A549 (cell line): ENCODE measurements at regions of chr2 and their contacts with region 1.

Region 1: GRCh38 chr2:96580771-96581170 is 44.2 kb downstream of the ARID5A start:
- DNase-seq: peak; percentile 18 to 46
- ATAC-seq: peak; percentile 93 to 97
- H3K4me3 ChIP-seq: no peak overlapping the region
- H3K27ac ChIP-seq: no peak overlapping the region
- H3K4me1 ChIP-seq: peaks cover 6% of the 10 kb centered on the region; the same call in 1 of the 3 replicates
- CTCF ChIP-seq: peak; percentile 44
- EP300 ChIP-seq: no peak
- POLR2A ChIP-seq: no peak
- RAD21 ChIP-seq: peak; percentile 62 to 65

Region 2: GRCh38 chr2:96594691-96595152 is 14.0 kb after region 1 on chr2:
- CTCF ChIA-PET with region 1: interaction called, 14 read pairs
- POLR2A ChIA-PET with region 1: no interaction called
- DNase-seq: no peak
- ATAC-seq: no peak
- H3K4me3 ChIP-seq: no peak overlapping the region
- H3K27ac ChIP-seq: no peak overlapping the region
- H3K4me1 ChIP-seq: no peaks in the 10 kb centered on the region
- CTCF ChIP-seq: no peak
- EP300 ChIP-seq: no peak
- POLR2A ChIP-seq: no peak
- RAD21 ChIP-seq: no peak